Gastrocnemius medialis (tissue), 4 donors: ENCODE measurements at regions of chr16 and their contacts with region 1.

Region 1: GRCh38 chr16:49834531-49835151 is 21.3 kb downstream of the ZNF423 start:
- DNase-seq: peak; percentile 88 to 96
- ATAC-seq: peak; percentile 64 to 70
- H3K4me3 ChIP-seq: peak overlapping the region; percentile 12 to 40 (median 26)
- H3K27ac ChIP-seq: peak overlapping the region; percentile 87 to 98 (median 96)
- H3K4me1 ChIP-seq: peaks cover 81 to 86% of the 10 kb centered on the region in 2 donors
- H3K27me3 ChIP-seq: no peaks in the 10 kb centered on the region
- CTCF ChIP-seq: no peak
- POLR2A ChIP-seq: peak; percentile 31 to 34

Region 2: GRCh38 chr16:49822649-49823370 is 11.8 kb before region 1 on chr16:
- in situ Hi-C with region 1: no loop called
- intact Hi-C with region 1: loop called (anchors 1 kb)
- DNase-seq: peak; percentile 80 to 94
- ATAC-seq: peak; percentile 91 to 93
- H3K4me3 ChIP-seq: no peak overlapping the region
- H3K27ac ChIP-seq: peak overlapping the region; percentile 87 to 98 (median 96)
- H3K4me1 ChIP-seq: peaks cover 74 to 77% of the 10 kb centered on the region in 2 donors
- H3K27me3 ChIP-seq: no peaks in the 10 kb centered on the region
- CTCF ChIP-seq: no peak
- POLR2A ChIP-seq: no peak

Region 3: DNA sequence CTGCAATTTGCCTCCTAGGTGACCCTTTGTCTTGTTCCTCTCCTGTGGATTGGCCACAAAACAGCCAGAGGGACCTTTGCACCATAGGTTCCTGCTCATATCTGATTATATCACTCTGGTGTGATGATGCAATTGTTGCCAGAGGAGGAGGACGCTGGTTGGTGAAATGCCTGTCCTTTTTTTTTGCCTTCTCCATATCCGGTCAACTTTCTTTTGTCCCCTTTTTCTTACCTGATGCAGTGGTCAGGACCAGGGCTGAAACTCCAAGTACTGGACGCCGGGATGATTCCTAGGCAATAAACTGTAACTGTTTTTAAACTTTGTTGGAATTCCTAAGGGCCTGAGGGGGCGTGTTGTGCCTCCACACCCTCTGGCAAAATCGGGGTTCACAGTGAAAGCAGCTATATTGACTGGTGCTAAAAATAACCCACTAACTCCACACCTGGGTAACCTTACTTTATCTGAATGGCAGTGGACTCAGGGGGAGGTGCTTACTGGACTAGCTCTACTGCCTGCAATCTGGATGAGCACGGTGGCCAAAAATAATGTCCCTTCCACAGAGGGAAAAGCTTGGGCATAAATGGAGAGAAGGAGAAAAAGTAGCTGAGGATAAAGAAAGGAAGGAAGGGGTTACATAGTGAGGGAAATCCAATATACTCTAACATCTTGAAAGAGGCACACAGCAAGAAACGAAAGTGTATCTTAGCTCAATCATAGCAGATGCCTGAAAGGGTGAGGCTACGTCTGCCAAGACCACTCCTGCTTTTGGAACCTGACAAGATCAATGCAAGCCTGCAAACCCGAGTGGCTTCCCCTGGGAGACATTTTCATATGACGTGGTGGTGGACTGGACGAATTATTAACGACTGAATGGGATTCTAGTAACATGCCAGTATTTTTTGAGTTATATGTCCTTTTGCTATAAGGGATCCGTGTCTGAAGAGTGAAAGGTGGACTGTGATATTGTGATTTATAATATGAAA is 49.7 kb after region 1 on chr16:
- in situ Hi-C with region 1: no loop called
- intact Hi-C with region 1: no loop called
- DNase-seq: no peak
- ATAC-seq: no peak
- H3K4me3 ChIP-seq: no peak overlapping the region
- H3K27ac ChIP-seq: no peak overlapping the region
- H3K4me1 ChIP-seq: no peaks in the 10 kb centered on the region
- H3K27me3 ChIP-seq: no peaks in the 10 kb centered on the region
- CTCF ChIP-seq: no peak
- POLR2A ChIP-seq: no peak